Psoas muscle (tissue), 8 donors: ENCODE measurements at regions of chr16 and their contacts with region 1.

Region 1: GRCh38 chr16:68517606-68518166 is 21.4 kb upstream of the ZFP90 start:
- DNase-seq: no peak
- ATAC-seq: no peak
- H3K4me3 ChIP-seq: no peak overlapping the region
- H3K27ac ChIP-seq: no peak overlapping the region
- H3K4me1 ChIP-seq: no peaks in the 10 kb centered on the region
- H3K27me3 ChIP-seq: no peaks in the 10 kb centered on the region
- CTCF ChIP-seq: no peak

Region 2: DNA sequence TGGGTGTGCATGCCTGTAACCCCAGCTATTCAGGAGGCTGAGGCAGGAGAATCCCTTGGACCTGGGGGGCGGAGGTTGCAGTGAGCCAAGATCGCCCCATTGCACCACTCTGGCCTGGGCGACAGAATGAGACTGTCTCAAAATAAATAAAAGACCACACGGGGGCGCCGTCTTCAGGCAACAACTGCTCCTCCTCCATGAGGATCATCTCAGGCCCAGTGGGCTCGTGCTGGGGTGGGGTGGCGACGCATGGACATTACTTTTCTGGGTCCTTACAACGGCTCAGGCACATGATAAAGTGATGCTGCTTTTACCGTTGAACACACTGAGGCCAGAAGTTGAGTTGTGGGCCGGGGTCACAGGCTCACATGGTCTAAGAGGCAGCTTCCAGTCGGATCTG is 150.7 kb before region 1 on chr16:
- intact Hi-C with region 1: loop called in 1 of 2 experiments (anchors 10 kb)
- DNase-seq: no peak
- ATAC-seq: peak in 3 of 4 donors; percentile 28 to 52 (median 52)
- H3K4me3 ChIP-seq: no peak overlapping the region
- H3K27ac ChIP-seq: no peak overlapping the region
- H3K4me1 ChIP-seq: no peaks in the 10 kb centered on the region
- H3K27me3 ChIP-seq: no peaks in the 10 kb centered on the region
- CTCF ChIP-seq: peak; percentile 28